GM12878 (cell line): ENCODE measurements at regions of chr14 and their contacts with region 1.

Region 1: DNA sequence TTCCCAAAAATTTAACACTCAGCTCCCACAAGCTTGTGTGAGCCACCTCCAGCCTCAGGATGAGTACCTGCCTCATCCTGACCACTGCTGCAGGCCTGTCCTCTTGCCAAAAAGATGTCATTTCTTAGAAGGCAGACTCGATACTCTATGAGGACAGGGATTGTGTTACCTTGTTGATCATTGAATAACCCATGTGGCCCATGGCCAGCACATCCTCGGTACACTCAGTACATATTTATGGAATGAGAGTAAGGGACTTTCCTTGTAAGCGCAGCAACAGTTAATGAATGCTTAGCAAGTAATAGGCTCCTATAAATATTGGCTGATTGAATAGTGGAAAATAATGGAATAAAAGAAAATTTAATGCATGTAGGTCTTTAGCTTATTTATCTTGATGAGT is 15.3 kb upstream of the DGLUCY start:
- DNase-seq: no peak
- ATAC-seq: no peak
- H3K4me3 ChIP-seq: no peak overlapping the region
- H3K27ac ChIP-seq: no peak overlapping the region
- H3K4me1 ChIP-seq: no peaks in the 10 kb centered on the region
- H3K27me3 ChIP-seq: no peaks in the 10 kb centered on the region; a peak in 1 of 4 replicates
- CTCF ChIP-seq: no peak
- EP300 ChIP-seq: no peak
- POLR2A ChIP-seq: no peak
- RAD21 ChIP-seq: no peak

Region 2: DNA sequence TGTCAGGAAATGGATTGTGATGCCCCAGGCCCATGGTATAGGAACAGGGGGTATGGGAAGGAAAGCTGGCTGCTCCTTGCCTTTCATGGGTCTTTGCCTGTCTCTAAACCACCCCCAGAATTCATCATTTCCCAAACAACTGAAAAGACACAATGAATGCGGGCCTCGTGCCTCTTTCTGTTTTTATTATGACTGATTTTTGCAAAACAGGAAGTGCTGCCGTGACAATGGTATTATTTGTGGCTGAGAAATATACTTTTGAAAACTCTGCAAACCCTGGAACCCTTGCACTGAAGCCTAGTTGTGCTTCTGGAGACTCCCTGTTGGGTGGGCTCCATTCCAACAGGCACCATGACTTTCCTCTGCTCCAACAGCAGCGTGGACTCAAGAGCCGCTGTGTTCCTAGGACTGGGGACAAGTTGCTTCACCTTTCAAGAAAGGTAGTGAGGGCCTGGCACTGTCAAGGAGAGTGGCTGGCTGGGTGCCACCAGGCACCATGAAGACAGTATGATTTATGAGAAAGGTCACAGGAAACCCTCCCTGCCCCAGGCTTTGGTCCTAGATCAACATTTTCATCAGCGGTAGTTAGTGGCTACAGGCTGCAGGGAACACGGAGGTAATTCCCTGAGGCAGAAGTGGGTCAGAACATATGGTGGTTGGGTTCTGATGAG is 10.5 kb after region 1 on chr14:
- CTCF ChIA-PET with region 1: interaction called, 4 read pairs
- POLR2A ChIA-PET with region 1: interaction called, 5 read pairs
- RAD21 ChIA-PET with region 1: interaction called, 3 read pairs
- SMC1A ChIA-PET with region 1: interaction called, 11 read pairs
- in situ Hi-C with region 1: no loop called
- intact Hi-C with region 1: no loop called
- DNase-seq: no peak
- ATAC-seq: peak; percentile 13
- H3K4me3 ChIP-seq: no peak overlapping the region
- H3K27ac ChIP-seq: peak overlapping the region; percentile 71
- H3K4me1 ChIP-seq: peaks cover 31% of the 10 kb centered on the region
- H3K27me3 ChIP-seq: no peaks in the 10 kb centered on the region
- CTCF ChIP-seq: no peak
- EP300 ChIP-seq: peak; percentile 9 to 35; a peak in 1 of 4 replicates
- POLR2A ChIP-seq: no peak
- RAD21 ChIP-seq: no peak

Region 3: DNA sequence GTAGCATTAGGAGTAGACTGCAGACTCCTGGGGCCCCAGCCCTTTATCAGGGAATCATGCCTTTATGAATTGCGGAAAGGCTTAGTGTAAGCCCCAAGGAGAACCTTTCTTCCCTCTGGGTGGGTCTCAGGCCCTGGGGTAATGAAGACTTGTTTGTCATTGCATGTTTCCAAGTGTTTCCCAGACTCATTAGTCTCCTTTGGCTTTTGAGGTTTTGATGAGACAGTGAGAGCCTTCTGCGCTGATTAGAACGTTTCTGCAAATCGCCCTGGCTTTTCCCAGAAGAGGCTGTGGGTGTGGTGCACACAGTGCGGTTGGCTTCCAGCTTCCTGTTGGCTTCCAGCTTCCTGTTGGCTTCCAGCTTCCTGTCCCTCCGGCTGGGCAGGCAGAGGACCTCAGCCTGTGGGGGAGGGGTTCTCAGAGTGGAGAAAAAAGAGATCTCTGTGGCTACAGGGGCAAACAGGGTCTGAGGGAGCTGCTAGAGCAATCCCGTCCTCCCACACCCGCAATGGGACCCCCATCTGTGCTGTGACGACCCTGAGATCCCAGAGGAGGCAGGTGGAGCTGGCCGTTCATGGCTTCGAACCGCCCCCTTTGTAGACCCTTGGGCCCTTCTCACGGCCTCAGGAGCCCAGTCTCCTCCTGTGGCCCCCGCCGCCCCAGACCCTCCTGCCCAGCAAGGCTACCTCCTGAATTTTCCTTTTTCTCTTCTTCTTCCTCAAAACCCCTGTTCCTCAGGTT is 103.8 kb after region 1 on chr14:
- CTCF ChIA-PET with region 1: no interaction called
- POLR2A ChIA-PET with region 1: no interaction called
- RAD21 ChIA-PET with region 1: no interaction called
- SMC1A ChIA-PET with region 1: no interaction called
- in situ Hi-C with region 1: no loop called
- intact Hi-C with region 1: no loop called
- DNase-seq: no peak
- ATAC-seq: no peak
- H3K4me3 ChIP-seq: no peak overlapping the region
- H3K27ac ChIP-seq: no peak overlapping the region
- H3K4me1 ChIP-seq: no peaks in the 10 kb centered on the region
- H3K27me3 ChIP-seq: no peaks in the 10 kb centered on the region
- CTCF ChIP-seq: no peak
- EP300 ChIP-seq: no peak
- POLR2A ChIP-seq: no peak
- RAD21 ChIP-seq: no peak